Activated B cell treated with CpG ODN at 0.5 μM for 24 hours (primary cell): ENCODE measurements at regions of chr7 and their contacts with region 1.

Region 1: DNA sequence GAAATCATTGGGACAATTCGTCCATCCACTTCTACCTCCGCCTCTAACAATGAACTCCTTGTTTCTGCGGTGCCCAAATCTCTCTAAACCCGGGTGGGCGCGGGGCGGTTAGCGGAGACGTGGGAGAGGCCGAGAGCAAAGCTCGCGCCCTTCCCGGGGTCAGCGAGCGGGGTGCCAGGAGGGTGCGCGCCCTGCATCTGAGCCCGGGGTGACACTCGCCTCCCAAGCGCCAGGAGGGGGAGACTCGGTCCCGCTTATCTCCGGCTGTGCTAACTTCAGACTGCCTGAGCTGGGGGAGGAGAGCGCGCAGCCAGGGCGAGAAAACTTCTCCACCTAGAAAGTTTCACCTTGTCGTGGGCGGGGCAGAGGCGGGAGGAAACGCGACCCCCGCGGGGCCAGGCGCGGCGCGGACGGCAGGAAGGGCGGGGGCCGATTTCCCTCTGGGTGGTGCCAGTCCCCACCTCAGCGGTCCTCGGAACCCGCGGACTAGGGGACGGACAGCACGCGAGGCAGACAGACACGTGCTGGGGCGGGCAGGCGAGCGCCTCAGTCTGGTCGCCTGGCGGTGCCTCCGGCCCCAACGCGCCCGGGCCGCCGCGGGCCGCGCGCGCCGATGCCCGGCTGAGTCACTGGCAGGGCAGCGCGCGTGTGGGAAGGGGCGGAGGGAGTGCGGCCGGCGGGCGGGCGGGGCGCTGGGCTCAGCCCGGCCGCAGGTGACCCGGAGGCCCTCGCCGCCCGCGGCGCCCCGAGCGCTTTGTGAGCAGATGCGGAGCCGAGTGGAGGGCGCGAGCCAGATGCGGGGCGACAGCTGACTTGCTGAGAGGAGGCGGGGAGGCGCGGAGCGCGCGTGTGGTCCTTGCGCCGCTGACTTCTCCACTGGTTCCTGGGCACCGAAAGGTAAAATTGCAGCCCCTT is at the start of gene MET:
- DNase-seq: peak; percentile 54
- ATAC-seq: peak; percentile 86
- H3K4me3 Mint-ChIP-seq: peak within 1 kb of the TSS; percentile 79
- H3K27ac Mint-ChIP-seq: no peak within 1 kb of the TSS
- H3K4me1 Mint-ChIP-seq: peaks cover 20% of the 10 kb centered on the region
- H3K27me3 Mint-ChIP-seq: peaks cover 64% of the 10 kb centered on the region
- CTCF ChIP-seq: no peak
- total RNA-seq, gene MET: 1.1 and 1.5 TPM in 2 replicates

Region 2: GRCh38 chr7:116258734-116259133 is 413.2 kb before region 1 on chr7:
- CTCF ChIA-PET with region 1: no interaction called
- POLR2A ChIA-PET with region 1: interaction called, 5 read pairs
- intact Hi-C with region 1: loop called (anchors 1 kb)
- DNase-seq: no peak
- ATAC-seq: peak; percentile 60
- H3K4me3 Mint-ChIP-seq: no peak overlapping the region
- H3K27ac Mint-ChIP-seq: no peak overlapping the region
- H3K4me1 Mint-ChIP-seq: peaks cover 12% of the 10 kb centered on the region
- H3K27me3 Mint-ChIP-seq: no peaks in the 10 kb centered on the region
- CTCF ChIP-seq: peak; percentile 63

Region 3: GRCh38 chr7:116534790-116535189 is 137.1 kb before region 1 on chr7:
- CTCF ChIA-PET with region 1: no interaction called
- POLR2A ChIA-PET with region 1: interaction called, 13 read pairs
- intact Hi-C with region 1: loop called (anchors 5 kb)
- DNase-seq: no peak
- ATAC-seq: no peak
- H3K4me3 Mint-ChIP-seq: no peak overlapping the region
- H3K27ac Mint-ChIP-seq: no peak overlapping the region
- H3K4me1 Mint-ChIP-seq: no peaks in the 10 kb centered on the region
- H3K27me3 Mint-ChIP-seq: peaks cover 13% of the 10 kb centered on the region
- CTCF ChIP-seq: no peak

Region 4: DNA sequence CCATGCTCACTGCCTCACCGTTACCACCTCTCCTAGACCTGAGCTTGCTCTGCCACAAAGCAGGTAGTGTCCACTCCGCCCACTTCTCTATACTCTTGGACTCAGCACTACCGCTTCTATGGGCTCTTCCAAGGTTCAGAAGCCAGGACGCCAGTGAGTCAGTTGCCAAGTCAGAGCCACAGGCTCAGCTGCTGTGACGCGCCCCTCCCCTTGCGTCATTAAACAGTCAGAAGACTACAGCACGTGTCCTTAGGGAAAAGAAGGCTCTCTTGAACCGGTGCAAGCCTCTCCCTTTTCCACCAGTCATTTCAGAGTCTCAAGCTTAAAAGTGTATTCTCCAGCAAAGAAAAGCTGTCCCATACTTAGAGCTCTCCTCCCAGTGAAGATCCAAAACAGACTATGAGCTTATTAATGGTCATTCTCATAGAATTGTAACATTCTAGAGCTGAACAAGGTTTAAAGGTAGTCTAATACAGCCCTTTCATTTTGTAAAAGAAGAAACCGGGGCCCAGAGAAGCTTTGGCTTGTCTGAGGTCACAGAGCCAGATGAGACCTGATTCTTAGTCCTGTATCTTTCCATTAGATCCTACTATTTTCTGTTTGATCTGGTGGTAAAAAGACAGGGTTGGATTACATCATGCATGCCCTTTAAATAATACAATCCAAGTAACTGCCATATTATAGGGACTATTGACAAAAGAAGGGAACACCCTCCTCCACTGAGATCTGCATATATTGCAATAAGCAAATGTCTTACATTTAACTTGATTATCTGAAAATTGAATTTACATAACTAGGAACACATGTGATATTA is 40.8 kb before region 1 on chr7:
- CTCF ChIA-PET with region 1: no interaction called
- POLR2A ChIA-PET with region 1: no interaction called
- intact Hi-C with region 1: loop called (anchors 2 kb)
- DNase-seq: peak; percentile 36
- ATAC-seq: peak; percentile 84
- H3K4me3 Mint-ChIP-seq: peak overlapping the region; percentile 74
- H3K27ac Mint-ChIP-seq: peak overlapping the region; percentile 70
- H3K4me1 Mint-ChIP-seq: peaks cover 26% of the 10 kb centered on the region
- H3K27me3 Mint-ChIP-seq: peaks cover 6% of the 10 kb centered on the region
- CTCF ChIP-seq: no peak

Region 5: GRCh38 chr7:116715077-116715476 is 43.1 kb after region 1 on chr7:
- CTCF ChIA-PET with region 1: no interaction called
- POLR2A ChIA-PET with region 1: no interaction called
- intact Hi-C with region 1: no loop called
- DNase-seq: no peak
- ATAC-seq: no peak
- H3K4me3 Mint-ChIP-seq: no peak overlapping the region
- H3K27ac Mint-ChIP-seq: no peak overlapping the region
- H3K4me1 Mint-ChIP-seq: no peaks in the 10 kb centered on the region
- H3K27me3 Mint-ChIP-seq: peaks cover 15% of the 10 kb centered on the region
- CTCF ChIP-seq: no peak

Region 6: DNA sequence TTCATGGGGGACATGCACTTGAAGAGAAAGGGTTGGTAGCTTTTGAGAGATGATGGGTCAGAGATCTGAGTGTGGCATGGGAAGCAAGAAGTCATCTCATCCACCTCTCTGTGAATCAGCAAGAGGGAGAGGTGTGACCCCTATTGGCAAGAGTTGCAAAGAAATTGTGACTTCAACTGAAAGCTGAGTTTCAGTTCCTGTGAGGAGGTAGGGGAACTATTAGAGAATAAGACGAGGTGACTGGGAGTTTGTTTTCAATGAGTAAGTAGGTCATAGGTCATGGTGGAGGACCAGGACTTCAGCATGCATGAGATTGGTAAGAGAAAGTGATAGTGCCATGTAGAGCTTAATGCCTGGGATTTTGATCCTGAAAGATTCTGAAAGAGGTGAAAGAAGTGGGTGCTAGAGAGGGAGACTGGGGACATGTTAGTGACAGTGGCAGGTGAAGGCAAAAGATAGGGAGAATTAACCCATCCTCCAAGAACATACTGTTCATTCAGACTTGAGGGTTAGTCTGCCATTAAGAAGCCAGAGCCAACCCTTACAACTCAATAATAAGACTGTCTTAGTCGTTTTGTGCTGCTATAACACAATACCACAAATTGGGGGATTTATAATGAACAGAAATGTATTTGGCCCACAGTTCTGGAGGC is 115.0 kb after region 1 on chr7:
- CTCF ChIA-PET with region 1: interaction called, 10 read pairs
- POLR2A ChIA-PET with region 1: interaction called, 5 read pairs
- intact Hi-C with region 1: loop called (anchors 1 kb)
- DNase-seq: no peak
- ATAC-seq: peak; percentile 97
- H3K4me3 Mint-ChIP-seq: no peak overlapping the region
- H3K27ac Mint-ChIP-seq: no peak overlapping the region
- H3K4me1 Mint-ChIP-seq: no peaks in the 10 kb centered on the region
- H3K27me3 Mint-ChIP-seq: peaks cover 2% of the 10 kb centered on the region
- CTCF ChIP-seq: no peak

Region 7: GRCh38 chr7:116809636-116810266 is 137.8 kb after region 1 on chr7:
- CTCF ChIA-PET with region 1: interaction called, 3 read pairs
- POLR2A ChIA-PET with region 1: no interaction called
- intact Hi-C with region 1: loop called (anchors 1 kb)
- DNase-seq: no peak
- ATAC-seq: peak; percentile 50
- H3K4me3 Mint-ChIP-seq: no peak overlapping the region
- H3K27ac Mint-ChIP-seq: no peak overlapping the region
- H3K4me1 Mint-ChIP-seq: no peaks in the 10 kb centered on the region
- H3K27me3 Mint-ChIP-seq: peaks cover 9% of the 10 kb centered on the region
- CTCF ChIP-seq: peak; percentile 53

Region 8: DNA sequence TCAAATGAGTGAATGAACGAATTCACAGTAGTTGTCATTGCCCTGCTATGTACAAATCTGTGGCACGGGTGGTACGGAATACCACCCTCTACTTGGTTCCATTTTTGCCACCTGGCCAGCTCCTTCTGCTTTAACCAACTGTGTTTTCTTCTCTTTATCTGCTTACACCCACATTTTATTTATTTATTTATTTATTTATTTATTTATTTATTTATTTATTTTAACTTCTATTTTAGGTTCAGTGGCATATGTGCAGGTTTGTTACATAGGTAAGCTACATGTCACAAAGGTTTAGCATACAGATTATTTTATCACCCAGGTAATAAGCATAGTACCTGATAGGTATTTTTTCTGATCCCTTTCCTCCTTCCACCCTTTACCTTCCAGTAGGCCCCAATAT is 148.2 kb after region 1 on chr7:
- CTCF ChIA-PET with region 1: no interaction called
- POLR2A ChIA-PET with region 1: no interaction called
- intact Hi-C with region 1: no loop called
- DNase-seq: no peak
- ATAC-seq: no peak
- H3K4me3 Mint-ChIP-seq: no peak overlapping the region
- H3K27ac Mint-ChIP-seq: no peak overlapping the region
- H3K4me1 Mint-ChIP-seq: peaks cover 7% of the 10 kb centered on the region
- H3K27me3 Mint-ChIP-seq: peaks cover 5% of the 10 kb centered on the region
- CTCF ChIP-seq: no peak

Region 9: GRCh38 chr7:117119192-117119924 is 447.4 kb after region 1 on chr7:
- CTCF ChIA-PET with region 1: no interaction called
- POLR2A ChIA-PET with region 1: no interaction called
- intact Hi-C with region 1: loop called (anchors 5 kb)
- DNase-seq: peak; percentile 41
- ATAC-seq: no peak
- H3K4me3 Mint-ChIP-seq: no peak overlapping the region
- H3K27ac Mint-ChIP-seq: no peak overlapping the region
- H3K4me1 Mint-ChIP-seq: no peaks in the 10 kb centered on the region
- H3K27me3 Mint-ChIP-seq: no peaks in the 10 kb centered on the region
- CTCF ChIP-seq: peak; percentile 66